ENCODE measurements at regions of chr19 and their contacts with region 1.

Region 1: DNA sequence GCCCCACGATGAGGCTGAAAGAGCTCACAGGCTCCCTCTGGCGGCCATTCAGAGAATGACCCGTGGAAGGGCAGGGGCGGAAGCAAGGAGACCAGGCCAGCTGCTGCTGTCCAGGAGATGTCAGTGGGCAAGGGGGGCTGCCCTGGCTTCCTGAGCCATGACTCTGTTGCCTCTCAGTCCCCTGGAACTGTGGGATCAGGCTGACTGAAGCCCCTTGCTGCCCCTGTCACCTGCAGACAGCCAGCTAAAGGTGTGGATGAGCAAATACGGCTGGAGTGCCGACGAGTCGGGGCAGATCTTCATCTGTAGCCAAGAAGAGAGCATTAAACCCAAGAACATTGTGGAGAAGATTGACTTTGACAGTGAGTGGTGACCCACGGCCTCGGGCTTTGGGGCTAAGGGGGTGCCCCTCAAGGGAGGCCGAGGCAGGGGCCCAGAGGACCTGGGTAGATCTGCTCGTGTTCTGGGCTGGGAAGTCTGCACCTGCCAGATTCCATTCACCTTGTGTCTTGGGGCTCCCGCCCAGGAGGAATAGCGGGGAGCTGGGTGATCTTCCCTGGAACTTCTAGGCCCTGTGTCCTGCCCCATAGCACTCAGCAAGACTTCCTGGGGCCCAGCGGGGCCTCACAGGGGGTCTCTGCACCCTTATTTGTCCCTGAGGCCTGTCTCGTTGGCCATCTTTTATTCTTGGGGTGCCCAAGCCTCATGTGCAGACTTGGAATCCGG is 12.5 kb upstream of the ACTN4 start:
- DNase-seq: peak; percentile 46 to 77
- H3K4me3 ChIP-seq: no peak overlapping the region
- H3K27ac ChIP-seq: no peak overlapping the region
- H3K4me1 ChIP-seq: peaks cover 36% of the 10 kb centered on the region
- H3K27me3 ChIP-seq: no peaks in the 10 kb centered on the region
- CTCF ChIP-seq: peak; percentile 95

Region 2: GRCh38 chr19:38514812-38515633 is 119.9 kb before region 1 on chr19:
- CTCF ChIA-PET with region 1: interaction called, 11 read pairs
- POLR2A ChIA-PET with region 1: no interaction called
- intact Hi-C with region 1: loop called (anchors 1 kb)
- DNase-seq: peak in 1 of 2 experiments; percentile 70
- H3K4me3 ChIP-seq: no peak overlapping the region
- H3K27ac ChIP-seq: no peak overlapping the region
- H3K4me1 ChIP-seq: no peaks in the 10 kb centered on the region
- H3K27me3 ChIP-seq: peaks cover 15% of the 10 kb centered on the region; the same call in 1 of the 2 replicates
- CTCF ChIP-seq: peak; percentile 90

Region 3: GRCh38 chr19:38658462-38659306 is 23.8 kb after region 1 on chr19:
- CTCF ChIA-PET with region 1: interaction called, 10 read pairs
- POLR2A ChIA-PET with region 1: interaction called, 10 read pairs
- intact Hi-C with region 1: loop called (anchors 2 kb)
- DNase-seq: peak; percentile 70 to 98
- H3K4me3 ChIP-seq: peak overlapping the region; percentile 54
- H3K27ac ChIP-seq: peak overlapping the region; percentile 99
- H3K4me1 ChIP-seq: peaks cover 97% of the 10 kb centered on the region
- H3K27me3 ChIP-seq: no peaks in the 10 kb centered on the region
- CTCF ChIP-seq: no peak

Region 4: GRCh38 chr19:38707512-38708114 is 72.7 kb after region 1 on chr19:
- CTCF ChIA-PET with region 1: no interaction called
- POLR2A ChIA-PET with region 1: interaction called, 11 read pairs
- intact Hi-C with region 1: loop called (anchors 1 kb)
- DNase-seq: peak; percentile 69 to 84
- H3K4me3 ChIP-seq: no peak overlapping the region
- H3K27ac ChIP-seq: peak overlapping the region; percentile 46
- H3K4me1 ChIP-seq: peaks cover 26% of the 10 kb centered on the region
- H3K27me3 ChIP-seq: no peaks in the 10 kb centered on the region
- CTCF ChIP-seq: no peak

Region 5: DNA sequence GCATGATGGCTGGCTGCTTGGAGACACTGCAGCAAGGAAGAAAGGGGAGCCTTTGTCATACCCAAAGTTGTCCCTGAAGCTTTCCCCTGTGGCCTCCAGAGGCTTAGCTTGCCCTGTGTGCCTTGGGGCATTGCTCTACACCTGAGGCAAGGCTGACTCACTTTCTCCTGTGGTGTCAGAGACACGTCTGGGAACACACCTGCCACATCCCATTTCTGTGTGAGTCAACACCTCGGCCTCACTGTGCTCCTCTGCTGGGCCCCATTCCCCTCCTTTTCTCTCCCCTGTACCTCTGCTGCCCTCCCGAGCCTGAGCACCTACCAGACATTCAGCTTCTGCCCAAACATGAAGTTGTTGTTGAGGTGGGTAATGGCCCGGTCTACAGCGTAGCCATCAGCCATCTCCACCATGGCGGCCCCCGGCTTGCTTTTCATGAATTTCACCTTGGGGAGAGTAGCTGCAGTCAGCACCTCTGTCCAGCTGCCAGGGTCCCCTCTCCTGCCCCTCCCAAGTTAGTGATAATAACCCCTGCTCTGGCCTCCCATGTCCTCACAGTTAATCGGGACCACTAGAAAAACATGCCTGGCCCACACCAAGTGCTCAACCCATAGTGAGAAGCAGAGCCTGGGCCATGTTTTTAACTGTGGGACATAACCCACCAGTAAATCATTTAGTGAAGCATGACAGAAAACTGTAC is 203.8 kb after region 1 on chr19:
- CTCF ChIA-PET with region 1: no interaction called
- POLR2A ChIA-PET with region 1: interaction called, 4 read pairs
- intact Hi-C with region 1: loop called (anchors 1 kb)
- DNase-seq: peak; percentile 94 to 98
- H3K4me3 ChIP-seq: peak overlapping the region; percentile 34; the same call in 1 of the 2 replicates
- H3K27ac ChIP-seq: peak overlapping the region; percentile 98
- H3K4me1 ChIP-seq: peaks cover 65% of the 10 kb centered on the region
- H3K27me3 ChIP-seq: no peaks in the 10 kb centered on the region
- CTCF ChIP-seq: peak; percentile 79

Region 6: GRCh38 chr19:38929929-38930775 is 295.2 kb after region 1 on chr19 and contains the start of gene SARS2:
- CTCF ChIA-PET with region 1: interaction called, 13 read pairs
- POLR2A ChIA-PET with region 1: interaction called, 7 read pairs
- intact Hi-C with region 1: loop called (anchors 1 kb)
- DNase-seq: peak; percentile 86 to 92
- H3K4me3 ChIP-seq: peak within 1 kb of the TSS; percentile 86
- H3K27ac ChIP-seq: peak within 1 kb of the TSS; percentile 65
- H3K4me1 ChIP-seq: peaks cover 17% of the 10 kb centered on the region; the same call in 1 of the 2 replicates
- H3K27me3 ChIP-seq: no peaks in the 10 kb centered on the region
- CTCF ChIP-seq: peak; percentile 93
- total RNA-seq, gene SARS2: 33.7 and 34.9 TPM in 2 replicates

Measured in PC-9 (cell line).